ENCODE measurements at regions of chr7 and their contacts with region 1.

Region 1: DNA sequence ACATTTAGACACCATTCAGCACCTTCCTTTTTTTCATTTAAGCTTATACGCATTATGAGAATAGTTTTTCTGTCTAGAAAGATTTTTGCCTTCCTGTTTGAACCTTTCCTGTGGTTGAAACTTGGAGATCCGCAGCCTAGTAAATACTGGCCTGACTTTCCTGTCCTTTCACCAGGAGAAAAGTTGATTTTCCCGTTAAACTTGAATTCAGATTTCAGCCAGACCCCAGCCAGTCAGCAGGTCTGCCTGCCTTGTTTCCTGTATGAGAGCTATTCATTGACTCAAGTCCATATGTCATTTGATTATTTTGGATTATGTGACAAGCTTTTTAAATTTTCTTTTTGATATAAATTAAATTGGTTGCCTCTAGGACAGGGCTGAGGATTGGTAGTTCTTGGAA is 71.5 kb downstream of the EVX1 start:
- DNase-seq: no peak
- H3K4me3 ChIP-seq: no peak overlapping the region
- H3K27ac ChIP-seq: no peak overlapping the region
- H3K4me1 ChIP-seq: no peaks in the 10 kb centered on the region
- H3K27me3 ChIP-seq: peaks cover 7% of the 10 kb centered on the region
- CTCF ChIP-seq: no peak

Region 2: DNA sequence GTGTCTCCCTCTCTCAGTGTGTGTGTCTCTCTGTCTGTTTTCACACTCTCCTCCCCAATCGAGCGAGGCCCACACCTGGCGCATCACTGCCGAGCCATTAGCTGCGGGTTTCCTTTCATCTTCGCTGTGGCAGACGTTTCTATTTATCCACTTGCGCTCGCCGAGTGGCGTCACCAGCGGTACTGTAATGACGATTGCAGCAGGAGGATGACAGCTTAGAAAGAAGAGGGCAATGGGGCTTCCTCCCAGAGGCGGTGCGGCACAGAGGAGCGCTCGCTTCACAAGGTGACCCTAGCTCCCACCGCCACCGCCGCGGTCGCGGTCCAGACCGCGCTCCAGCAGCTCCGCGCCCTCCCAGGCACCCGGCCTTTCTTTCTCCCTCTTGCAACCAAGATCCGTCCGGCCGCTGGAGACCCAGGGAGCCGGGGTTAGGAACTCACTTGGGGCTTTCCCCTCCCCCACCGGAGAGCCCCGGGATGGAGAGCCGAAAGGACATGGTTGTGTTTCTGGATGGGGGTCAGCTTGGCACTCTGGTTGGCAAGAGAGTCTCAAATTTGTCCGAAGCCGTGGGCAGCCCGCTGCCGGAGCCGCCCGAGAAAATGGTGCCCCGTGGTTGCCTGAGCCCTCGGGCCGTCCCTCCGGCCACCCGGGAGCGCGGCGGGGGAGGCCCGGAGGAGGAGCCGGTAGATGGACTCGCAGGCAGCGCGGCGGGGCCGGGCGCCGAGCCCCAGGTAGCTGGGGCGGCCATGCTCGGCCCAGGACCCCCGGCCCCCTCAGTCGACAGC is 71.4 kb before region 1 on chr7 and contains the start of gene EVX1:
- CTCF ChIA-PET with region 1: no interaction called
- dilution Hi-C with region 1: loop called (anchors 5 kb)
- in situ Hi-C with region 1: no loop called
- intact Hi-C with region 1: no loop called
- DNase-seq: no peak
- H3K4me3 ChIP-seq: peak within 1 kb of the TSS in 1 of 3 experiments; percentile 7
- H3K27ac ChIP-seq: no peak within 1 kb of the TSS
- H3K4me1 ChIP-seq: peaks cover 19% of the 10 kb centered on the region
- H3K27me3 ChIP-seq: peaks cover 74% of the 10 kb centered on the region
- CTCF ChIP-seq: no peak
- total RNA-seq, gene EVX1: not detected

Region 3: GRCh38 chr7:27295236-27295635 is 18.9 kb before region 1 on chr7:
- CTCF ChIA-PET with region 1: no interaction called
- dilution Hi-C with region 1: no loop called
- in situ Hi-C with region 1: no loop called
- intact Hi-C with region 1: no loop called
- DNase-seq: no peak
- H3K4me3 ChIP-seq: no peak overlapping the region
- H3K27ac ChIP-seq: no peak overlapping the region
- H3K4me1 ChIP-seq: no peaks in the 10 kb centered on the region
- H3K27me3 ChIP-seq: no peaks in the 10 kb centered on the region
- CTCF ChIP-seq: no peak

Region 4: DNA sequence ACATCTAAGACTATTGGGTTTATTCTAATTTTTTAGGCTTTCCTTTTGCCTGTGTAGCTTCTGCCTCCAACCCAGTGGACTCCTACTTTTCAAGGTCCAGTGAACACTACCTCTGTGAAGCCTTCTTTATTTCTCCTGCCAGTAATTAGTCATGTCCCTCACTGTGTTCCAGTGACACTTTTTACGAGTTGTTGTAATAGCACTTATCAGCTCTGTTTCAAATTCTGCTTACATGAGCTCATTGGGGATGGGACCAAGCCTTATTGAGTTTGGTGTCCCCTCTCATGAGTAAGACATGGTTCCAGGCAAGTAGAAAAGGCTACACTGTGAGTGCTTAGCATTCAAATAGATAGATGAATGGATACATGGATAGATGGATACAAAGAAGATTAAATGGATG is 164.0 kb after region 1 on chr7:
- CTCF ChIA-PET with region 1: no interaction called
- dilution Hi-C with region 1: no loop called
- in situ Hi-C with region 1: no loop called
- intact Hi-C with region 1: no loop called
- DNase-seq: no peak
- H3K4me3 ChIP-seq: no peak overlapping the region
- H3K27ac ChIP-seq: no peak overlapping the region
- H3K4me1 ChIP-seq: no peaks in the 10 kb centered on the region
- H3K27me3 ChIP-seq: no peaks in the 10 kb centered on the region
- CTCF ChIP-seq: no peak

Measured in mammary epithelial cell (primary cell).